AG04450 (cell line): ENCODE measurements at regions of chr17 and their contacts with region 1.

Region 1: DNA sequence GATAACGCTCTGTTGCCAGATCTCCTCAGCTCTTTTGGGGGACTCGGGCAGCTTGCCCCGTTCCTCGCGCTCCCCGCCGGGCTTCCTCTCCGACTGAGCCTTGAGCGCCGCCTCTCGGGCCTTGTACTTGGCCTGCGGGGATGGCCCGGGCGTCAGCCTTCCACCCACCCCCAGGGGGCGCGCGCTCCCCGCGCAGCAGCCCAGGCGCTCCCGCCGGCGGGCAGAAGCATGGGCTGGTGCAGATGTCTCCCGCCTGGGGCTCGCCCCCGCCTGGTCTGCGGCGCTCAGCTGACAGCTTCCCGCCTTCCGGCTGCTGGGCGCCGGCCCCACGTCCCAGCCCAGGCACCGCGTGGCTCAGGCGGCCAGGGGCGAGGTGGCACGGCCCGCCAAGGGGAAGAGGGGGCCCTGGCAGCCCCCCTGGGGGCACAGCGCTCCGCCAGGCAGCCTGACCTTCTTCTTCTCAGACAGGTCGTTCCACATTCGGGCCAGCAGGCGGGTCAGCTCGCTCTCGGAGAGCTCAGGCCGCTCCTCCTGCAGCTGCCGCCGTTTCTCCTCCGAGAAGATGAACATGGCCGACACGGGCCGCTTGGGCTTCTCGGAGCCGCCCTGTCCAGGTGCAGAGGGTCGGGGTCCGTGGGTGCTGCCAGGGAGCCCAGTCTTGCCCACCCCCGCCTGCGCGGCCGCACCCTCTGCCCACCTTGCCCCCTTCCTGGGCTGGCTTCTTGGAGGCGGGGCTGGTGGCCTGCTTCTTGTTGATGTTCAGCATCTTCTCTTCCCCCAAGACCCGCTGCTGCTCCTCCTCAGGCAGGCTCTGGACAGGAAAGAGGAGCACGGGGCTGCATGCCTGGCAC is 8.9 kb downstream of the UBTF start:
- DNase-seq: peak; percentile 71
- H3K4me3 ChIP-seq: no peak overlapping the region
- H3K27ac ChIP-seq: peak overlapping the region; percentile 42
- H3K27me3 ChIP-seq: no peaks in the 10 kb centered on the region
- CTCF ChIP-seq: peak; percentile 94

Region 2: DNA sequence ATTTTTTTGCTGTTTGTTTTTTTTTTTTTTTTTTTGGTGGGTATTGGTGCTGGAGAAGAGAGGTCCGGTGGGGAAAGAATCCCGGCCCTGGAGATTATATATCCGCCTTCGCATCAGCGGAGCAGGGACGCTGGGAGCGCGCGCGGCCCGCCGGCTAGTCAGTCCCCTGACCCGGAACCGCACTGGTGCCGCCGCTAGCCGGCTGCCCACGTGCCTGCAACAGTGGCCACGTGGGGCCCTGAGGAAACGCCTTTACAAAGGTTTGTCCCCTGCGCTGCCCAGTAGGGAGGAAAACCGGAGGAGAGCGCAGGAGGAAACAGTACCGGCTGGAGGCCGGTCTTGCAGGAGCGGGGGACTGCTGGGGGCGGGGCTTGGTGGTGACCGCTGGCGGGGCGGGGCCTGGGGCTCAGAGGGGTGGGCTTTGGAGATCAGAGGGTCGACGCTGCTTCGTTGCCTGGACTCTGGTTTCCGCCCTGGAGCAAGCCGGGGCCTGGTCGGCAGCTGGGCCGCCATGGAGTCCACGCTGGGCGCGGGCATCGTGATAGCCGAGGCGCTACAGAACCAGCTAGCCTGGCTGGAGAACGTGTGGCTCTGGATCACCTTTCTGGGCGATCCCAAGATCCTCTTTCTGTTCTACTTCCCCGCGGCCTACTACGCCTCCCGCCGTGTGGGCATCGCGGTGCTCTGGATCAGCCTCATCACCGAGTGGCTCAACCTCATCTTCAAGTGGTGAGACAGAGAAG is 139.9 kb before region 1 on chr17 and contains the start of gene G6PC3:
- CTCF ChIA-PET with region 1: interaction called, 10 read pairs
- POLR2A ChIA-PET with region 1: no interaction called
- DNase-seq: peak; percentile 95
- H3K4me3 ChIP-seq: peak within 1 kb of the TSS; percentile 79
- H3K27ac ChIP-seq: peak within 1 kb of the TSS; percentile 93
- H3K27me3 ChIP-seq: no peaks in the 10 kb centered on the region
- CTCF ChIP-seq: no peak
- polyA plus RNA-seq, gene G6PC3: 69.8 and 87.4 TPM in 2 replicates

Region 3: GRCh38 chr17:44199553-44200477 is 10.8 kb before region 1 on chr17 and contains the start of gene ATXN7L3:
- CTCF ChIA-PET with region 1: interaction called, 10 read pairs
- POLR2A ChIA-PET with region 1: interaction called, 9 read pairs
- DNase-seq: peak; percentile 95
- H3K4me3 ChIP-seq: peak within 1 kb of the TSS; percentile 78
- H3K27ac ChIP-seq: peak within 1 kb of the TSS; percentile 89
- H3K27me3 ChIP-seq: no peaks in the 10 kb centered on the region
- CTCF ChIP-seq: no peak
- polyA plus RNA-seq, gene ATXN7L3: 44.1 and 51.6 TPM in 2 replicates

Region 4: DNA sequence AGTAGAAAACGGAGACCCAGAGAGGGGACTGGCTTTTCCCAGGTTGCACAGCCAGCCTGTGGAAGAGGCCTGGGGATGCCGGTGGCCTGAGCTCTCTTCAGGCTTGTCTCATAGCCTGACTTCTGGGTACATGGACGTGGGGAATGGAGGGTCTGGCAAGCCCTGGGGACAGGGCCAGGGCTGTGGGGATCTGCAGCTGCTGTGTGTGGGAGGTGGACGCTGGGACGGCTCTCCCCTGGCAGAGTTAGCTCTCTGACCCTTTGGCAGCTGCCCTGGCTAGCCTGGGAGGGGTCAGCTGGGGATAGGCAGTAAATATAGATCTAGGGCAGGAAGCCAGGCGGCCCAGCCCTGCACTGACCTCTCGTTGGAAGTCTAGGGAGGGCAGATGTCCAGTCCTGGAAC is 36.9 kb after region 1 on chr17:
- CTCF ChIA-PET with region 1: no interaction called
- POLR2A ChIA-PET with region 1: no interaction called
- DNase-seq: no peak
- H3K4me3 ChIP-seq: no peak overlapping the region
- H3K27ac ChIP-seq: no peak overlapping the region
- H3K27me3 ChIP-seq: peaks cover 4% of the 10 kb centered on the region
- CTCF ChIP-seq: no peak

Region 5: GRCh38 chr17:44344939-44345453 is 134.4 kb after region 1 on chr17 and contains the start of gene GRN:
- CTCF ChIA-PET with region 1: interaction called, 21 read pairs
- POLR2A ChIA-PET with region 1: interaction called, 4 read pairs
- DNase-seq: peak; percentile 98
- H3K4me3 ChIP-seq: peak within 1 kb of the TSS; percentile 98
- H3K27ac ChIP-seq: peak within 1 kb of the TSS; percentile 11
- H3K27me3 ChIP-seq: peaks cover 4% of the 10 kb centered on the region
- CTCF ChIP-seq: no peak
- polyA plus RNA-seq, gene GRN: 203 and 322 TPM in 2 replicates

Region 6: GRCh38 chr17:44376124-44376523 is 165.6 kb after region 1 on chr17:
- CTCF ChIA-PET with region 1: interaction called, 11 read pairs
- POLR2A ChIA-PET with region 1: no interaction called
- DNase-seq: no peak
- H3K4me3 ChIP-seq: no peak overlapping the region
- H3K27ac ChIP-seq: no peak overlapping the region
- H3K27me3 ChIP-seq: peaks cover 13% of the 10 kb centered on the region
- CTCF ChIP-seq: peak; percentile 51